Calu3 (cell line): ENCODE measurements at regions of chr6 and their contacts with region 1.

Region 1: DNA sequence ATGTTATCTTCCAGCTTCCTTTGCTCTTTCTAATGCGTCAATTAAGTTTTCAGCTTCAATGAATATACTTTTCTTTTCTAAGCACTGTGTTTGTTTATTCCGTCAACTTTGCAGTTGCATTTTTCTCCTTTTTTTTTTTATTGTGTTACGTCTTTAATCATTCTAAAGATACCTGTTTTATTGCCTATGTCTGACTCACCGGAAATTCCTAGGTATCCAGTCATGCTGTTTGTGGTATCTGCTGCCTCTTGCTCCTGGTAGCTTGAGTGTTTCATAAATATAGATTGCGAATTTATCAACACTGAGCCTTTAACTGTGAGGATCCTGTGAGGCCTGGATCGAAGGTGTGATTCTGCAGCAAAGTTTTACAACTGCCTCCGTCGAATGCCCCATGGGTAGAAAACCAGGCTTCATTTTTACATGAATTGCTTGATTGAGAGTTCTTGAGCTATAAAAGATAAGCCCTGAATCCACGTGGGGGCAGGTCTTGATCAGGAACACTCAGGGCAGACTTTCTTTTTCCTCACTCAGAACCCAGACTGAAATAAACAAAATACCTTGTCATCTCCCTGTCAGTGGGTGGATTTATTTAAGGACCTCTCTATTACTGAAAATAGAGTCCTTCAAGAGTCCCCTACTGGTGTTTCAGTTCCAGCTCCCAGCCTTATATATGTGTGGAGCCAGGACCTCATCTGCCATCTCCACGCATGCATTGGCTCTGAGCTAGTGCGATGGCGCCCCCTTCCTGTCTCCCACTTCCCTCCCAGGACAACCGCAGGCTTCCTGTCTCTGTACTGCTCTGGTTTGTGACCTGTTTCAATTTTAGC is 60.1 kb upstream of the LRRC1 start:
- DNase-seq: peak; percentile 79
- H3K4me3 Mint-ChIP-seq: peak overlapping the region; percentile 43
- H3K27ac Mint-ChIP-seq: peak overlapping the region; percentile 90
- H3K4me1 Mint-ChIP-seq: peaks cover 57% of the 10 kb centered on the region
- H3K27me3 Mint-ChIP-seq: no peaks in the 10 kb centered on the region
- CTCF ChIP-seq: peak; percentile 55

Region 2: GRCh38 chr6:53956068-53956711 is 221.5 kb after region 1 on chr6:
- CTCF ChIA-PET with region 1: interaction called, 34 read pairs
- intact Hi-C with region 1: loop called (anchors 2 kb)
- DNase-seq: peak; percentile 86
- H3K4me3 Mint-ChIP-seq: no peak overlapping the region
- H3K27ac Mint-ChIP-seq: no peak overlapping the region
- H3K4me1 Mint-ChIP-seq: peaks cover 14% of the 10 kb centered on the region
- H3K27me3 Mint-ChIP-seq: no peaks in the 10 kb centered on the region
- CTCF ChIP-seq: peak; percentile 89